ENCODE measurements at regions of chr10 and their contacts with region 1.

Region 1: GRCh38 chr10:87659571-87660483 is at the start of gene PAPSS2:
- DNase-seq: no peak
- ATAC-seq: peak; percentile 75
- H3K4me3 ChIP-seq: peak within 1 kb of the TSS; percentile 61 to 70 (median 64)
- H3K27ac ChIP-seq: no peak within 1 kb of the TSS
- H3K4me1 ChIP-seq: peaks cover 27% of the 10 kb centered on the region
- H3K27me3 ChIP-seq: peaks cover 5 to 31% of the 10 kb centered on the region in 2 experiments; a peak in 4 of 5 replicates
- CTCF ChIP-seq: no peak
- EP300 ChIP-seq: no peak
- POLR2A ChIP-seq: no peak
- RAD21 ChIP-seq: no peak
- total RNA-seq, gene PAPSS2: 0.11 and 0.17 TPM in 2 replicates

Region 2: GRCh38 chr10:87622314-87623004 is 37.4 kb before region 1 on chr10:
- CTCF ChIA-PET with region 1: no interaction called
- POLR2A ChIA-PET with region 1: no interaction called
- in situ Hi-C with region 1: no loop called
- intact Hi-C with region 1: no loop called
- DNase-seq: no peak
- ATAC-seq: peak; percentile 47
- H3K4me3 ChIP-seq: no peak overlapping the region
- H3K27ac ChIP-seq: no peak overlapping the region
- H3K4me1 ChIP-seq: peaks cover 40% of the 10 kb centered on the region
- H3K27me3 ChIP-seq: no peaks in the 10 kb centered on the region; a peak in 1 of 5 replicates
- CTCF ChIP-seq: peak; percentile 27
- EP300 ChIP-seq: no peak
- POLR2A ChIP-seq: no peak
- RAD21 ChIP-seq: no peak

Region 3: DNA sequence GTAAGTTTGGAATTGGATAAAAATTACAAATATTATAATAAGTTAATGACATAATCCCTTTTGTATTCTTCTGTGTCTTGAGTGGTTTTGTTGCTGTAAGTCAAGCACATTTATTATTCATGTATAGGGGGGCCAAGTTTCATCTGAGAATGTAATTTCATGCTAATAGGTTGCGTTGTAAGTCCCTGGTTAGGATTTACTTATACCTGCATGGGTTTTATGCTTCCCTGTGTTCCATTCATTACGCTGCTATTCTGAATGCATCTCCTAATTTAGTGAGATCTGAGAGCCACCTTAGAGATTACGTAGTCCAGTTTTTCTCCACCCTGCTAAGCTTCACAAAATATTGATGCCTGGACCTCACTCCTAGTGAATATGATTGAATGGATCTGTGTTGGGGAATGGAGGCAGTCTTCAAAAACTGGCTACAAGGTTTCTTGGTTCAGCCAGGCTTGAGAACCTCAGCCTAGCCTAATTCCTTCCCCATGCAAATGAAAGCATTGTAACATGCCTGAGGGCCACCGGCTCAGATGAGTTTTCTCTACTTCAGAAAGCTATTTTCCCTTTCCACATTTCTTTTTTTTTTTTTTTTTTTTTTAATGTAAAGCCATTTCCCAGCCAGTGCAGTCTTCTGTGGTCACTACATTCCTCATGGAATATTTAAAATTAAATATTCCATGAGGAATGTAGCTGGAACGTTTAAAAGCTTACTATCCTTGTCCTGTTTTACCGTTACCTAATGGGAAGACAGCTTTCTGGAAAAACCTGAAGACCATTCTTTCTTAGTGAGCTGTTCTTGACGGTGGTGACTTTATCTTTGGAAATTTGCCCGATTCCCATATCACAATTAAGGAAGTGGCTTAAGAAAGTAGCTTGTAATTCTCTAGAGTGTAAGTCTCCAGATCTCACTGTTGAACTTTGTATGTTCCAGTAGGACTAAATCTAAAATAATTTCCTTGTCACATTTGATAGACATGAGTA is 15.9 kb after region 1 on chr10:
- CTCF ChIA-PET with region 1: no interaction called
- POLR2A ChIA-PET with region 1: no interaction called
- in situ Hi-C with region 1: no loop called
- intact Hi-C with region 1: no loop called
- DNase-seq: no peak
- ATAC-seq: no peak
- H3K4me3 ChIP-seq: no peak overlapping the region
- H3K27ac ChIP-seq: no peak overlapping the region
- H3K4me1 ChIP-seq: no peaks in the 10 kb centered on the region
- H3K27me3 ChIP-seq: peaks cover 0 to under 1% of the 10 kb centered on the region in 2 experiments; a peak in 1 of 5 replicates
- CTCF ChIP-seq: no peak
- EP300 ChIP-seq: no peak
- POLR2A ChIP-seq: no peak
- RAD21 ChIP-seq: no peak

Region 4: GRCh38 chr10:87771871-87772500 is 112.2 kb after region 1 on chr10:
- CTCF ChIA-PET with region 1: interaction called, 7 read pairs
- POLR2A ChIA-PET with region 1: no interaction called
- in situ Hi-C with region 1: no loop called
- intact Hi-C with region 1: loop called (anchors 1 kb)
- DNase-seq: peak; percentile 19
- ATAC-seq: peak; percentile 56
- H3K4me3 ChIP-seq: no peak overlapping the region
- H3K27ac ChIP-seq: no peak overlapping the region
- H3K4me1 ChIP-seq: no peaks in the 10 kb centered on the region
- H3K27me3 ChIP-seq: no peaks in the 10 kb centered on the region
- CTCF ChIP-seq: peak; percentile 51
- EP300 ChIP-seq: no peak
- POLR2A ChIP-seq: no peak
- RAD21 ChIP-seq: no peak

Measured in HepG2 (cell line).